Activated CD4-positive, alpha-beta T cell treated with anti-CD3 and anti-CD28 coated beads, Interleukin-2, amount 10 ng/mL, durations not matched to agents 24 days and 14 days (primary cell): ENCODE measurements at regions of chr7 and their contacts with region 1.

Region 1: GRCh38 chr7:134710859-134711624 is 64.4 kb downstream of the BPGM start:
- DNase-seq: peak; percentile 85
- H3K4me3 Mint-ChIP-seq: peak overlapping the region; percentile 74
- H3K27ac Mint-ChIP-seq: peak overlapping the region; percentile 93
- H3K4me1 Mint-ChIP-seq: peaks cover 20% of the 10 kb centered on the region
- H3K27me3 Mint-ChIP-seq: peaks cover 2% of the 10 kb centered on the region

Region 2: GRCh38 chr7:134293002-134293740 is 417.9 kb before region 1 on chr7:
- intact Hi-C with region 1: no loop called
- DNase-seq: peak; percentile 45
- H3K4me3 Mint-ChIP-seq: no peak overlapping the region
- H3K27ac Mint-ChIP-seq: no peak overlapping the region
- H3K4me1 Mint-ChIP-seq: no peaks in the 10 kb centered on the region
- H3K27me3 Mint-ChIP-seq: no peaks in the 10 kb centered on the region

Region 3: GRCh38 chr7:134571746-134572461 is 139.1 kb before region 1 on chr7:
- intact Hi-C with region 1: no loop called
- DNase-seq: no peak
- H3K4me3 Mint-ChIP-seq: no peak overlapping the region
- H3K27ac Mint-ChIP-seq: no peak overlapping the region
- H3K4me1 Mint-ChIP-seq: no peaks in the 10 kb centered on the region
- H3K27me3 Mint-ChIP-seq: peaks cover 3% of the 10 kb centered on the region

Region 4: GRCh38 chr7:134669845-134670373 is 41.1 kb before region 1 on chr7:
- intact Hi-C with region 1: loop called (anchors 5 kb)
- DNase-seq: peak; percentile 85
- H3K4me3 Mint-ChIP-seq: peak overlapping the region; percentile 16
- H3K27ac Mint-ChIP-seq: peak overlapping the region; percentile 71
- H3K4me1 Mint-ChIP-seq: peaks cover 21% of the 10 kb centered on the region
- H3K27me3 Mint-ChIP-seq: no peaks in the 10 kb centered on the region